IMR-90 (cell line): ENCODE measurements at regions of chr19 and their contacts with region 1.

Region 1: DNA sequence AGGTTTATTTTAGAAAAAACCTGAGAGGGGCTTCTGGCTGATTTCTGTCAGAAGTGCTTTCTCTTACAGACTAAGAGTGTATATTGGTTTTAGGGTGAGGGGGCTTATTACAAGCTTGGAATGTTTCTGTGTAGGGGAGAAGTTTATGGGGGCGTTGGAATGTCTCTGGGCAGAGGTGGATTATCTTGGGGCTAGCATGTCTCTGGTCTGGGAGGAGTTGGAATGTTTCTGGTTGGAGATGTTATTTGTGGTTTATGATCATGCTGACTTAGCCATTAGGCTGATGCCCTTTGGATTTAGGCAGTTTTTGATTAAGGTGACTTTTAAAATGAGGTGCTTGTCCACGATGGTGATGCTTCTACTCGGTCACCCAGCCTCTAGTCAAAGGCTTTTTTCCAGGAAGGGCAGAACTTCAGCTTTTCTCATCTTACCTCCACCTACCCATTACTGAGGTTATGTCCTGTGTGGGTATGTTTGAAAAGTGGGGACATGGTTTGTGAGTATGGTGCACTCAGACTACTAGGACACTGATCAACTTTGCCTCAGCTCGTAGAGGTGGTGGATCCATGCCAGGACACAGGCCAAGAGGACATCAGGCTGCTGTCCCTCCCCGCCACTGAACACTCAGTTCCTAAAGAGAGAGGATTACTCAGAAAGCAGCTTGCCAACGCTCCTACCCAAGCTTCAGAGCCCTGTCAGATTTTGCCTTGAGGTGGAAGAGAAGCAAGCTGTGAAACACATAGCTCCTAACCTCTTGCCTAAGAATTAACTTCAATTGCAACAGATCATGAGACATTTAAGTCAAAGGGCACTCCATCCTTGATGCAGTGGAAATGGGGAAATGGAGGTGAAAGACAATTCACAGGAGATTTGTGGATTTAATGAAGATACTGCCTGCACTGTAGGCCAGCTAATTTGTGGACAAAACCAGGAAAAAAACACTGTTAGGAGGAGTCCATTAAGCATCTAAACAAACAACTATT is 63.6 kb downstream of the ZNF44 start:
- DNase-seq: no peak
- ATAC-seq: no peak
- H3K4me3 ChIP-seq: no peak overlapping the region
- H3K27ac ChIP-seq: no peak overlapping the region
- H3K4me1 ChIP-seq: no peaks in the 10 kb centered on the region
- H3K27me3 ChIP-seq: no peaks in the 10 kb centered on the region
- CTCF ChIP-seq: no peak
- POLR2A ChIP-seq: no peak
- RAD21 ChIP-seq: no peak

Region 2: DNA sequence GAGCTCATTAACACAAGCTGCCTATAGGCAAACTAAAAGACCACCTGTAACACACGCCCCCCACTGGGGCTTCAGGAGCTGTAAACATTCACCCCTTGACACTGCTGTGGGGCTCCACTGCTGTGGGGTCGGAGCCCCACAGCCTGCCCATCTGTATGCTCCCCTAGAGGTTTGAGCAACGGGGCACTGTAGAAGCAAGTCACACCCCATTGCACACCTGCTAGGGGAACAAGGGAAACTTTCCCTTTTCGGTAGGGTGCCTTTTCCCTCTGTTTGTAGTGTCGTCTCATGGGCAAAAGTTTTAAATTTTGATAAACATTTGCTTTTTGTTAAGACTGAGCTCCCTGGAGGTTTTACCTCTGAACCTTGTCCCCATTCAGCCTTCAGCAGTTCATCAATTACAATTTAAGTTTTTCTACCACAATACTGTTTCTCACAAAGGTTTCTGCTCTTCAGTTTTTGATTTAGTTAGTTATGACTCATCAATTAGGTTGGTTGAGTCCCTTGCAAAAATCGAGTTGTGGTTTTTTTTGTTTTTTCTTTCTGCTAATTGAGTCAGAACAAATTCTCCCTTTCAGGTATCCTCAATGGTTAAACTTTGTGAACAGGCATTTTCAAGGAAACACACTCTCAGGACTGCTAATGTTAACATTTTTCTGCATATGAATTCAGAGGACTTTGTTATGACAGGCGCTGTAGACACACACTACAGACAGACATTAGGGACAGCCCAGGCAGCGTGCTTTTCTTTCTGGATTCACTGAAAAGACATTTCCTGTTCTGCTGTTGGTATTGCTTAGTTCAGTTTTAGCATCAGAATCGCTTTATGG is 230.7 kb before region 1 on chr19:
- CTCF ChIA-PET with region 1: no interaction called
- POLR2A ChIA-PET with region 1: no interaction called
- dilution Hi-C with region 1: no loop called
- in situ Hi-C with region 1: no loop called
- intact Hi-C with region 1: no loop called
- DNase-seq: peak; percentile 43
- ATAC-seq: peak; percentile 35
- H3K4me3 ChIP-seq: no peak overlapping the region
- H3K27ac ChIP-seq: no peak overlapping the region
- H3K4me1 ChIP-seq: peaks cover 3% of the 10 kb centered on the region
- H3K27me3 ChIP-seq: no peaks in the 10 kb centered on the region
- CTCF ChIP-seq: no peak
- POLR2A ChIP-seq: no peak
- RAD21 ChIP-seq: no peak

Region 3: GRCh38 chr19:12314553-12314952 is 83.5 kb after region 1 on chr19:
- CTCF ChIA-PET with region 1: no interaction called
- POLR2A ChIA-PET with region 1: no interaction called
- dilution Hi-C with region 1: no loop called
- in situ Hi-C with region 1: loop called (anchors 10 kb)
- intact Hi-C with region 1: no loop called
- DNase-seq: no peak
- ATAC-seq: no peak
- H3K4me3 ChIP-seq: peak overlapping the region; percentile 25; the same call in 1 of the 2 replicates
- H3K27ac ChIP-seq: no peak overlapping the region
- H3K4me1 ChIP-seq: no peaks in the 10 kb centered on the region
- H3K27me3 ChIP-seq: no peaks in the 10 kb centered on the region
- CTCF ChIP-seq: no peak
- POLR2A ChIP-seq: no peak
- RAD21 ChIP-seq: no peak